SK-N-SH (cell line): ENCODE measurements at regions of chr2 and their contacts with region 1.

Region 1: DNA sequence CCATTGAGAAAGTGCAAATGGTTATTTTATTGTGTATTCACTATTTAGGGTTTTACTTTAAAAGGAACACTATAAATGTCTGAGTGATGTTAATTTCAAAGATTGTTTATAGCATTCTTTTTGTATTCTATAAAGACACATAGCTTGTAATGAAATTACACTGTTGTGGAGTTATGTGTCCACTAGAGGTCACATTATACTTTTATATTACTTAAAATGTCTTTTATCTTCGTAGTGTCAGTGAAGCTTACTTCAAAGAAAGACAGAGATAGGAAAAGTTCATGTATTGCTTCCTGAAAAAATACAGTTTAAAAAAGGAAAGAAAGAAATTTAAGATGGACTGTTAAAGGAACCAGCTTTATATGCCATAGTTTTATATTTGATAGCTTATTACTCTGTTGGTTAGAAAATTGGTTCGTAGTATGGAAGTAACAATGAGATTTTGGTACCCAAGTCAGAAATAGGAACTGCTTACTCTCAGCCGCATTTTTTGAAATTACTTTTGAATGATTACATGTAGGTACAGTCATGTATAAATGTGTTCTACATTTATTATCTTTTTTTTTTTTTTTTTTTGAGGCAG is 20.5 kb downstream of the APLF start:
- DNase-seq: peak; percentile 36
- H3K4me3 ChIP-seq: no peak overlapping the region; a peak in 1 of 4 replicates
- H3K27ac ChIP-seq: no peak overlapping the region
- H3K4me1 ChIP-seq: no peaks in the 10 kb centered on the region; a peak in 1 of 4 replicates
- H3K27me3 ChIP-seq: no peaks in the 10 kb centered on the region
- CTCF ChIP-seq: peak; percentile 72
- EP300 ChIP-seq: no peak
- RAD21 ChIP-seq: peak; percentile 66

Region 2: GRCh38 chr2:68282811-68283418 is 204.9 kb before region 1 on chr2:
- CTCF ChIA-PET with region 1: no interaction called
- POLR2A ChIA-PET with region 1: no interaction called
- DNase-seq: peak; percentile 69
- H3K4me3 ChIP-seq: no peak overlapping the region
- H3K27ac ChIP-seq: no peak overlapping the region
- H3K4me1 ChIP-seq: peaks cover 0 to 4% of the 10 kb centered on the region in 2 experiments; a peak in 2 of 4 replicates
- H3K27me3 ChIP-seq: no peaks in the 10 kb centered on the region
- CTCF ChIP-seq: peak; percentile 89
- EP300 ChIP-seq: no peak
- RAD21 ChIP-seq: peak; percentile 83

Region 3: GRCh38 chr2:68426848-68427579 is 60.9 kb before region 1 on chr2:
- CTCF ChIA-PET with region 1: no interaction called
- POLR2A ChIA-PET with region 1: no interaction called
- DNase-seq: no peak
- H3K4me3 ChIP-seq: no peak overlapping the region
- H3K27ac ChIP-seq: no peak overlapping the region
- H3K4me1 ChIP-seq: no peaks in the 10 kb centered on the region
- H3K27me3 ChIP-seq: no peaks in the 10 kb centered on the region
- CTCF ChIP-seq: no peak
- EP300 ChIP-seq: no peak
- RAD21 ChIP-seq: no peak

Region 4: DNA sequence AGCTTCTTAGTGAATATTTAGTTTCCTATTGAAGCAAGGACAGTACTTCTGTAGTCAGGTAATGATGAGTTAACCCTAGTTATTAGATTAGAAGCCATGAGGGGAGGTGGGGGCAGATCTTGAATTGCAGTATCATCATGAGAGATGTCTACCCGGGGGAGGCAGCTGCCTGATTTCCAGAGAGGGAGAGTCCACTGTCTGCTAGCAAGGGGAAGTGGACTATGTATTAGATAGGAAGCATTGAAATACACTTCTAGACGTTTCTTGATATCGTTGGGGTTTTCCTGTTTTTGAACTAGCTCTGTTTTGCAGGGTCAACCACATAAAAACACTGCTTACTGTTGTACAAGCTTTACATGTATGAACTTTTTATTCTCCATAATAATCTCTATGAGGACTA is 18.3 kb after region 1 on chr2:
- CTCF ChIA-PET with region 1: interaction called, 58 read pairs
- POLR2A ChIA-PET with region 1: no interaction called
- DNase-seq: no peak
- H3K4me3 ChIP-seq: no peak overlapping the region
- H3K27ac ChIP-seq: no peak overlapping the region
- H3K4me1 ChIP-seq: peaks cover 0 to 4% of the 10 kb centered on the region in 2 experiments; a peak in 2 of 4 replicates
- H3K27me3 ChIP-seq: no peaks in the 10 kb centered on the region
- CTCF ChIP-seq: no peak
- EP300 ChIP-seq: no peak
- RAD21 ChIP-seq: no peak

Region 5: GRCh38 chr2:68594674-68595492 is 107.0 kb after region 1 on chr2:
- CTCF ChIA-PET with region 1: interaction called, 21 read pairs
- POLR2A ChIA-PET with region 1: no interaction called
- DNase-seq: peak; percentile 48
- H3K4me3 ChIP-seq: no peak overlapping the region
- H3K27ac ChIP-seq: peak overlapping the region in 1 of 2 experiments; percentile 28; a peak in 1 of 4 replicates
- H3K4me1 ChIP-seq: peaks cover 0 to 4% of the 10 kb centered on the region in 2 experiments; a peak in 2 of 4 replicates
- H3K27me3 ChIP-seq: no peaks in the 10 kb centered on the region
- CTCF ChIP-seq: peak; percentile 92
- EP300 ChIP-seq: no peak
- RAD21 ChIP-seq: peak; percentile 57

Region 6: DNA sequence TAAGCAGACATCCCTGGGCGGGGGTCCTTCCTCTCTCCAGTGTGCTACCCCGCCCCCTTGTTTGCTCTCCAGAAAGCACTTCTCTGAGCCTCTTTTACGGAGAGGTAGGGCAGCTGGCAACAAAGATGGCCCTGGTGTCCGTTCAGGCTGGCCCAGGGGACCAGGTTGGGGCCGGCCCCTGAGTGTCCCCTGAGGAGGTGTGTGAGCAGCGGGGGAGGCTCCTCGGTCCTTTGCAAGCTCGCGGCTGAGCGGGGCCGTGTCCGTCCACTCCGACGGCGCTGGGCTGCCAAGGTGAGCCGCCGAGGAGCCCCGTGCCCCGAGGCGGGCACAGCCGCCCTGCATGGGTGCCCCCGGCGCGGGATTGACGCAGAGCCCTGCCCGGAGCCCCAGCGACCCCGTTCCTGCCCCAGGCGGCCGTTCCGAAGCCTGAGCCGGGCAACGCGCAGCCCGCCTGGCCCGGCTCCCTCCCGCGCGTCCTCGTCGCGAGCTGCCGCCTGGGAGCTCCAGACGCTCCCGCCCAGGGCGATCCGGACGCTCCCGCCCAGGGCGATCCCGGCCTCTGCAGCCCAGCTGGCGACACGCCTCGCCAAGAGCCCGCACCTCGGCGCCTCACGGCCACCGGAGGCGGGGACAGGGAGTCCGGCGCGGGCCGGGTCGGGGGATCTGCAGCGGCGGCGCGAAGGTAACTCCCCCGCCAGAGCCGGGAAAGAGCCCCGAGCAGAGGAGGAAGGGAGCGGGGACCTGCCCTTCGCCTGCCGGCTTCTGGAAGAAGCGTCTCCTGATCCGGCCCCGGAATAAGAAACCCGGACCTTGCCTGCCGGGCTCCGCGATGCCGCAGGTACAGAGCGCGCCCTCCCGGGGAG is 155.4 kb after region 1 on chr2 and contains the start of gene PROKR1:
- CTCF ChIA-PET with region 1: interaction called, 26 read pairs
- POLR2A ChIA-PET with region 1: no interaction called
- DNase-seq: peak; percentile 78
- H3K4me3 ChIP-seq: peak within 1 kb of the TSS; percentile 49 to 54
- H3K27ac ChIP-seq: no peak within 1 kb of the TSS
- H3K4me1 ChIP-seq: no peaks in the 10 kb centered on the region; a peak in 1 of 4 replicates
- H3K27me3 ChIP-seq: peaks cover 41% of the 10 kb centered on the region
- CTCF ChIP-seq: no peak
- EP300 ChIP-seq: no peak
- RAD21 ChIP-seq: no peak; the same call in 1 of the 2 replicates
- polyA plus RNA-seq, gene PROKR1: not detected in 2 replicates

Region 7: DNA sequence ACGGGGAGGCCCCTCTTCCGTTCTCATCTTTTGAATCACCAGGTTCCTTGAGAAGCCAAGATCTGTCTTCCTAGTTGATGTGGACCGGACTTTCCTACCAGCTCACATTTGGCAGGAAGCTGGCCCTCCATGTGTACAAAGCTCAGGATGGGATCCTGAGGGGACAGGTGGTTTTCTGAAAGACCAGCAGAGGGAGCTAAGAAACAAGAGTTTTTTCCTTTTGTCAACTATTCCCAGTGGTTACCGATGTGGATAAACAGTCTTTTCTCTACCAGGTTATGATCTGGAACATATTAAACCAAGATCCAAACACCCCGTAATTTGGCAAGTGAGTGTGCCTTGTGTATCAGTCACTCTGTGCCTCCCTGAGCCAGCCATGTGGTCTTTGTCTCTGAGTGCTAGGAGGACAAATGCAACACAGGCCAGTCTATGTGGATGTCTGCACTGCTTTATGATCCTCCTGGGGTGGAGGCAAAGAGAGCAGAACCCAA is 221.6 kb after region 1 on chr2:
- CTCF ChIA-PET with region 1: interaction called, 18 read pairs
- POLR2A ChIA-PET with region 1: no interaction called
- DNase-seq: peak; percentile 52
- H3K4me3 ChIP-seq: no peak overlapping the region
- H3K27ac ChIP-seq: peak overlapping the region in 1 of 2 experiments; percentile 53; a peak in 2 of 4 replicates
- H3K4me1 ChIP-seq: peaks cover 5 to 6% of the 10 kb centered on the region in 2 experiments; a peak in 3 of 4 replicates
- H3K27me3 ChIP-seq: peaks cover 9% of the 10 kb centered on the region; the same call in 1 of the 2 replicates
- CTCF ChIP-seq: peak; percentile 76
- EP300 ChIP-seq: no peak
- RAD21 ChIP-seq: peak; percentile 72

Region 8: GRCh38 chr2:68936427-68936826 is 448.6 kb after region 1 on chr2:
- CTCF ChIA-PET with region 1: interaction called, 10 read pairs
- POLR2A ChIA-PET with region 1: no interaction called
- DNase-seq: no peak
- H3K4me3 ChIP-seq: no peak overlapping the region
- H3K27ac ChIP-seq: peak overlapping the region; percentile 48 to 50; a peak in 3 of 4 replicates
- H3K4me1 ChIP-seq: peaks cover 2 to 24% of the 10 kb centered on the region in 2 experiments; a peak in 3 of 4 replicates
- H3K27me3 ChIP-seq: no peaks in the 10 kb centered on the region
- CTCF ChIP-seq: no peak
- EP300 ChIP-seq: no peak
- RAD21 ChIP-seq: no peak